ENCODE measurements at regions of chr17 and their contacts with region 1.

Region 1: DNA sequence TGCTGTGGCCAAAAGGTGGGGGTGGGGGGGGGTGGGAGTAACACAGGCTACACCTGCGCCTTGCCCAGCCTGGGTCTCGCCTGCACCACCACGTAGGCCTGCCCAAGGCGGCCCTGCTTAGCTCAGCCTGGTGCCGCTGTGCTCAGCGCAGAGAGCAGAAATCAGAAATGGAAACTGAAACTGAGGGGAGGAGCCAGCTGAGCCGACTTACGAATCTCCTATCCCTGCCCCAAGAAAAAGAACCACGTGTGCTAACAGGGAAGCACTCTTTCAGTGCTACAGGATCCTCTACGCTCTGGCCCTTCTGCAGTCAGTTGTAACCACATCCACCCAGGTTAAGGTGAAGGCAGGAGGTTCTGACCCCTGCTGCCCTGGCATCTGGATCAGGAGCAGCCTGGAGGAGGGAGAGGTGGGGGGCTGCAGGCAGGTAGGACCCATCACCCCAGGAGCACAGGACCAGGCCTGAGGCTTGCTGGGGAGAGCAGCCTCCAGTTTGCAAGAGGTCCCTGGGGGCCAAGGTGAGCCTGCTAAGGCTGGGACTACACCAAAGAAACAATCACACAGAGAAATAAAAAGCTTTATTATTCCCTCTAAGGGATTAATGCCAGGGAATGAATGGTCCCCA is at the start of gene DHX58:
- DNase-seq: peak; percentile 84 to 94
- H3K4me3 ChIP-seq: peak within 1 kb of the TSS; percentile 30
- CTCF ChIP-seq: no peak
- POLR2A ChIP-seq: no peak
- total RNA-seq, gene DHX58: 7.5 to 16.5 (median 12.1) TPM

Region 2: GRCh38 chr17:41966463-41967140 is 146.1 kb before region 1 on chr17 and contains the start of gene CNP:
- intact Hi-C with region 1: loop called (anchors 10 kb)
- DNase-seq: peak; percentile 88 to 98
- H3K4me3 ChIP-seq: peak within 1 kb of the TSS; percentile 85
- CTCF ChIP-seq: no peak
- POLR2A ChIP-seq: no peak
- total RNA-seq, gene CNP: 37.2 to 63.8 (median 44.5) TPM

Region 3: DNA sequence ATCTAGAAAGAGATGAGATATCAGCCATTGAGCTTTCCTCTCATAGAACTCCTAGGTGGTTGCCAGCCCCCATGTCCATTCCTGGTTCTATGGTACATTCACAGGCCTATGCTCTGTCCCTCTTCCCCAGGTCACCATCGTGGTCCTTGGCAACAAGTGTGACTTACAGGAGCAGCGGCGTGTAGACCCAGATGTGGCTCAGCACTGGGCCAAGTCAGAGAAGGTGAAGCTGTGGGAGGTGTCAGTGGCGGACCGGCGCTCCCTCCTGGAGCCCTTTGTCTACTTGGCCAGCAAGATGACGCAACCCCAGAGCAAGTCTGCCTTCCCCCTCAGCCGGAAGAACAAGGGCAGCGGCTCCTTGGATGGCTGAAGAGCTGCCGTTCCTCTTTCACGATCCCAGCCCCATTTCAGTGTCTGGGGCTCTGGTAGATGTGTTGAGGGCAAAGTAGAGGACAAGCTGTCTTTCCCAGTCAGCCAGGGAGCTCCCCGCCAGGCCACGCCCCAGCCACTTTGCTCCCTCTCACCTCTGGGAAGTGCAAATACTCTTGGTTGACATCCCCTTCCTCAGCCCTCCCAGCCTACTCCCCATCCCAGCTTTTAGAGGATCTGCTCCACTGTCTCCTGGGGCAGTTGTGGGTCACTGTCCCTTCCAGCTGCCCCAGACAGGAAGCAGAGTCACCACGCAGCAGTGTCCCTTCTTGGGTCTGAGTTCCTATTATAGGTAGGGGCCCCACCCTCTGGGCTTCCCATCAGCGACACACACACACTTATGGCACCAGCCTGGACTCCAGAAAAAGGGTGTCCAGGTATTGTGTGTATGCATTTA is 88.9 kb before region 1 on chr17:
- intact Hi-C with region 1: loop called (anchors 2 kb)
- DNase-seq: peak in 1 of 2 donors; percentile 36
- H3K4me3 ChIP-seq: no peak overlapping the region
- CTCF ChIP-seq: no peak
- POLR2A ChIP-seq: no peak

Region 4: DNA sequence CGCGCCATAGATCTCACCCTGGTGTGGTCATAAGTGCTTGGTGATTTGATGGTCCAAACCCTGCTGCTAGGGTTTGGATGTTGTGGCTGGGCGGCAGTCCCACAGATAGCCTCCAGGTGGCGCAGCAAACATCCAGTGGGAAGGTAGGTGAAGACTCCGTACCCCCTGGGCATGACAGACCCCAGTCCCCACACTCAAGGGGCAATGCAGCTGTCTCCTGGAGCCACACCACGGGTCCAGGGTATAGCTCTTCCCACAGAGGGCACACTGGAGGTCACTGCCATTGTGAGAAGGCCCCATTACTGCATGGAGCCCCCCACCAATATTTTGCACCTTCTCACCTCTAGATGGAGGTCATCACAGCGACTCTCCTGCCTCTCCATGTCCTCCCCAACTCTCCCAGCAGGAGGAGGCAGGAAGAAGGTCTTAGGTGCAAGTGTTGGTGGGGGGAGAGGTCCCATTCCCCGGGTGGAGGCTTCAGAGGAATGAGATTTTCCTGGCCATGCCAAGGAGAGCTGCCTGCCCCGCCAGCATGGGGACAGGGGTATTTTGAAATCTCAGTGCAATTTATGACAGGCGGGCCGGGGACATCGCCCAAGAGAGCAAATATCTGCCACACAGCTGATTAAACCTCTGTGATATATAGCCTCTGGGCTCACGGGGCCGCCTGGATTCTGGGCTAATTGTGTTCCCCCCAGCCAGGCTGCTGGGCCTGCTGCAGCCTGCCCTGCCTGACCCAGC is 45.1 kb before region 1 on chr17:
- intact Hi-C with region 1: loop called (anchors 5 kb)
- DNase-seq: peak; percentile 56 to 95
- H3K4me3 ChIP-seq: no peak overlapping the region
- CTCF ChIP-seq: peak in 1 of 3 donors; percentile 74
- POLR2A ChIP-seq: no peak